Activated CD8-positive, alpha-beta T cell treated with anti-CD3 and anti-CD28 coated beads for 36 hours (primary cell): ENCODE measurements at regions of chr1 and their contacts with region 1.

Region 1: DNA sequence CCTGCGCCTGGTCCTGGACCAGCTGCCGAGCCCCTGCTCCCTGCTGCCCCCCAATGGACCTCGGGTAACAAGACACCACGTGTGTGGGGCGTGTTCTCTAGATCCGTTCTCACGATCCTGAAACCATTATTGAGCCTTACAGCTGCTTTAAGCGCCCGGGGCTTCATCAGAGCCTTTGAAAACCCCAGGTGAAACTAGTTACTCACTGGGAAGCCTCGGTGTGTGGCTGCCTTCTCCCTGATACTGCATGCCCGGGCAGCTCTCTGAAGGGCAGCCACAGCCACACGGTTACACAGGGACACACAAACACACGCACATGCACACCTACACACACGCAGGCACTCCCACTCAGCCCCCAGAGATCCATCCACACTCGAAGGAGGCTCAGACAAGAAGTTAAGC is 5.3 kb downstream of the HES2 start:
- DNase-seq: peak; percentile 79
- ATAC-seq: peak; percentile 94
- H3K4me3 Mint-ChIP-seq: no peak overlapping the region
- H3K27ac Mint-ChIP-seq: no peak overlapping the region
- H3K4me1 Mint-ChIP-seq: peaks cover 11% of the 10 kb centered on the region
- H3K27me3 Mint-ChIP-seq: peaks cover 54% of the 10 kb centered on the region
- CTCF ChIP-seq: peak; percentile 62

Region 2: DNA sequence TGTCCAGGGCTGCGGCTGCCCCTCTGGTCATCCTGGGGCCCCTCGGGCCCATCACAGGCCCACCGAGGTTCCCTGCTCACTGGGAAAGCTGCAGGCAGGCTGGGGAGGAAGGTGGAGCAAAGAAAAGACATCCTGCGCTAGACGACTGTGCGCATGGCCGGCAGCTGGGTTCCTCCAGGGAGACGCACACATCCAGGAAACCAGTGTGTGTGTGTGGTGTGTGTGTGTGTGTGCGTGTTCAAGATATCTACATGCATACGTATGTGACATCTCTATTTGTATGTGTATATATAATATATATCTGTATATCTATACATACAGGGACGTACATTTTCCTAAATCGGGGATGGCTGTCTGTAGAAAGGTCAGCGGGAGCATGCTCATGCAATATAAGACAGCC is 84.6 kb before region 1 on chr1:
- CTCF ChIA-PET with region 1: no interaction called
- POLR2A ChIA-PET with region 1: no interaction called
- intact Hi-C with region 1: no loop called
- DNase-seq: no peak
- ATAC-seq: no peak
- H3K4me3 Mint-ChIP-seq: no peak overlapping the region
- H3K27ac Mint-ChIP-seq: no peak overlapping the region
- H3K4me1 Mint-ChIP-seq: no peaks in the 10 kb centered on the region
- H3K27me3 Mint-ChIP-seq: no peaks in the 10 kb centered on the region
- CTCF ChIP-seq: no peak

Region 3: DNA sequence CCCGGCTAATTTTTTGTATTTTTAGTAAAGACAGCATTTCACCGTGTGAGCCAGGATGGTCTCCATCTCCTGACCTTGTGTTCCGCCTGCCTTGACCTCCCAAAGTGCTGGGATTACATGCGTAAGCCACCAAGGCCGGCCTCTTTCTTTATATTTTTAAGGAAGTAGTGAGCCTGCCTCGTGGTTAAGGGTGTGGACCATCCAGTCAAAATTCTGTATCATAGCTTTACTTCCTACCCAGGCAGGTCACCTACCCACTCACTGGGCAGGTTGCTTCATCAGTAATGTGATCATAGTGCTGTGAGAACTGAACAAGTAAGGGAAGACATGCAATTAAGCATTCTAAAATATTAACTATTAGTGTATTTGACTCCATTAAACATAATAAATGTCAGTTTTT is 12.8 kb before region 1 on chr1:
- CTCF ChIA-PET with region 1: interaction called, 79 read pairs
- POLR2A ChIA-PET with region 1: interaction called, 3 read pairs
- intact Hi-C with region 1: no loop called
- DNase-seq: no peak
- ATAC-seq: no peak
- H3K4me3 Mint-ChIP-seq: no peak overlapping the region
- H3K27ac Mint-ChIP-seq: no peak overlapping the region
- H3K4me1 Mint-ChIP-seq: no peaks in the 10 kb centered on the region
- H3K27me3 Mint-ChIP-seq: no peaks in the 10 kb centered on the region
- CTCF ChIP-seq: no peak